Activated naive CD4-positive, alpha-beta T cell treated with anti-CD3 and anti-CD28 coated beads for 36 hours (primary cell): ENCODE measurements at regions of chr11 and their contacts with region 1.

Region 1: GRCh38 chr11:61695917-61696316 is 15.7 kb downstream of the DAGLA start:
- DNase-seq: peak; percentile 98
- H3K4me3 Mint-ChIP-seq: no peak overlapping the region
- H3K27ac Mint-ChIP-seq: no peak overlapping the region
- H3K4me1 Mint-ChIP-seq: peaks cover 28% of the 10 kb centered on the region
- H3K27me3 Mint-ChIP-seq: no peaks in the 10 kb centered on the region

Region 2: DNA sequence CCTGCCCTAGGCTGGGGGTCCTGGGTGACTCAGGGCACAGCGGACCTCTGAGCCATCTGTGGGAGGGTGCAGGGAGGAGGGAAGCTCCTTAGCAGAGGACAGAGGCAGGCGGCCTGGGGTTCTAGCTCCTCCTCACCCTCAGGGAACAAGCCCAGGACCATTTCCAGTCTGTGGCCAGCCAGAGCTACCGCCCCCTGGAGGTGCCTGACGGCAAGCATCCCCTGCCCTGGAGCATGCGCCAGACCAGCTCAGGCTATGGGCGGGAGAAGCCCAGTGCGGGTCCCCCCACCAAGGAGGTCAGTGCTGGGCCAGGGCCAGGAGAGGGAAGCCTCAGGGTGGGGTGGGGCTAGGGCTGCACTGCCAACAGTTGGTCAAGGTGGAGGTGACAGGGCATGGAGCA is 213.4 kb before region 1 on chr11:
- CTCF ChIA-PET with region 1: no interaction called
- intact Hi-C with region 1: no loop called
- DNase-seq: peak; percentile 45
- H3K4me3 Mint-ChIP-seq: no peak overlapping the region
- H3K27ac Mint-ChIP-seq: no peak overlapping the region
- H3K4me1 Mint-ChIP-seq: peaks cover 5% of the 10 kb centered on the region
- H3K27me3 Mint-ChIP-seq: peaks cover 2% of the 10 kb centered on the region

Region 3: DNA sequence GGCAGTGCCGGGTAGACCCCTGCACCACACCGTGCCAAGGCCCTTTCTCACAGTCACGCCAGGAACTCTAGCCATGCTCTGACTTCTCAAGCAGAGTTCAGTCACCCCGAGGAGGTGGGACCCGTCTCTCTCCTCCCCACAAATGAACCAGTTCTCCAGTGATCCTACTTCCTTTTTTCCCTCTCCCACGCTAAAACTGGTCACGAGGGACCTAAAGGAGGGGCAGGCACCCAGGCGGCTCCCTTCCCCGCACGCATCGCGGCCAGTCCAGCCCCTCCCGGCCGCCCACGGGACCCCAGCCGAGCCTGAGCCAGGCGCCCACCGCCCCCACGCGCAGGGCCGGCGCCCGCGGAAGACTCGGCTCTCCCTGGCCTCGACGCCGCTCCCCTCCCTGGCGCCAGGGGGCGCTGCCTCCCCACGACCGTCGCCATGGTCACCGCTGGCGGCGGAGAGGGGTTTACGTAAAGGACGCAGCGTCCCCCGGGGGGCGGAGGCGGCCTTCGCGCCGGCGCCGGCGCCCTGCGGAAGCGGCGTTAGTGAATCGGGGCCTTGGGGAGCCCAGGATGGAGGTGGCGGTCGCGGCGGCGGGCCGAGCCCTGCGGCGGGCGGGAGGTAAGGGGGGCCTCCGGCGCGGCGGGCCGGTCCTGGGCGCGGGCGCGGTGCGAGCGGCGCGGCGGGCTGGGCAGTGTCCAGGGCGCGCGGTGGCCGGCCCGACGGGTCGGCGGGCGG is 15.9 kb before region 1 on chr11 and contains the start of gene DAGLA:
- CTCF ChIA-PET with region 1: interaction called, 6 read pairs
- intact Hi-C with region 1: loop called (anchors 1 kb)
- DNase-seq: peak; percentile 68
- H3K4me3 Mint-ChIP-seq: peak within 1 kb of the TSS; percentile 27
- H3K27ac Mint-ChIP-seq: no peak within 1 kb of the TSS
- H3K4me1 Mint-ChIP-seq: peaks cover 3% of the 10 kb centered on the region
- H3K27me3 Mint-ChIP-seq: peaks cover 6% of the 10 kb centered on the region
- total RNA-seq, gene DAGLA: 0.02 to 0.07 TPM